Spleen (tissue), 13 donors: ENCODE measurements at regions of chr3 and their contacts with region 1.

Region 1: GRCh38 chr3:138915503-138916498 is 31.1 kb downstream of the FOXL2 start:
- DNase-seq: peak; percentile 98
- H3K4me3 ChIP-seq: peak overlapping the region; percentile 69 to 80 (median 74)
- H3K27ac ChIP-seq: peak overlapping the region; percentile 87 to 97 (median 90)
- H3K4me1 ChIP-seq: peaks cover 0 to 24% (median 18%) of the 10 kb centered on the region in 6 donors
- H3K27me3 ChIP-seq: peaks cover 0 to 9% (median 0%) of the 10 kb centered on the region in 7 donors
- CTCF ChIP-seq: peak; percentile 81 to 98 (median 94)
- POLR2A ChIP-seq: no peak

Region 2: GRCh38 chr3:138594150-138594934 is 321.5 kb before region 1 on chr3 and contains the start of gene CEP70:
- intact Hi-C with region 1: loop called (anchors 2 kb)
- DNase-seq: peak; percentile 97
- H3K4me3 ChIP-seq: peak within 1 kb of the TSS; percentile 61 to 89 (median 74)
- H3K27ac ChIP-seq: peak within 1 kb of the TSS; percentile 71 to 94 (median 86)
- H3K4me1 ChIP-seq: peaks cover 0 to 31% (median 12%) of the 10 kb centered on the region in 6 donors
- H3K27me3 ChIP-seq: peaks cover 0 to 9% (median 0%) of the 10 kb centered on the region in 7 donors
- CTCF ChIP-seq: peak; percentile 82 to 97 (median 95)
- POLR2A ChIP-seq: peak in 2 of 3 donors; percentile 59 to 67
- total RNA-seq, gene CEP70: 10.7 to 19.0 (median 14.7) TPM

Region 3: DNA sequence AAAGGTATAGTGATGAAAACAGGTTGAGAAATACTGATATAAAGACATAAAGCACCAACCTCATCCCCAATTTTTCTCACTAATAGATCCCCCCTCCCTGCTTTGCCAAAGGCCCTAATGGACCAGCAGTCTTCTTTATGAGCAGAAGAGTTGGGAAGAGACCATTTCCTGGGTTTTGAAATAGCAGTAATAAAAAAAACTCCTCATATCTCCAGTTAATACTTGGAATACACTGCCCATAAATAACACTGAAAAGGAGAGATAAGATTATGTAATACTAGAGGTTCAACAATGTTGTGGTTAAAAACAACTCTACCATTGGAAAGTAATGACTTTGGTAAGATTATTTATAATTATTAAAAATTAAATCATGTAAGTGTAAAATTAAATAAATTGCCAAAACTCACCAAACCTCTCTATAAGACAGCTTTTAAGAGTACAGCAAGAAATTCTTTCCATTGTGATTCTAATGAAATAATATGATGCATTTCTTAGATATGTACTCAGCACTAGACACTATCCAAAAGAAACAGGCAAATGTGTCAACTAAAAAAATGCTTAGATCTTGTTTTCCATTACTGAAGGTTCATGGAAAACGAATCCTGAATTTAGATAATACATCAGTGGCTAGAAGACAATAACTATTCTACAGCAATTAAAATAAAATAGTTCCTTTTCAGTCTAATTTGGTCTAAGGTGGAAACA is 219.0 kb before region 1 on chr3:
- intact Hi-C with region 1: loop called (anchors 5 kb)
- DNase-seq: no peak
- H3K4me3 ChIP-seq: no peak overlapping the region
- H3K27ac ChIP-seq: no peak overlapping the region
- H3K4me1 ChIP-seq: no peaks in the 10 kb centered on the region
- H3K27me3 ChIP-seq: no peaks in the 10 kb centered on the region
- CTCF ChIP-seq: no peak
- POLR2A ChIP-seq: no peak

Region 4: DNA sequence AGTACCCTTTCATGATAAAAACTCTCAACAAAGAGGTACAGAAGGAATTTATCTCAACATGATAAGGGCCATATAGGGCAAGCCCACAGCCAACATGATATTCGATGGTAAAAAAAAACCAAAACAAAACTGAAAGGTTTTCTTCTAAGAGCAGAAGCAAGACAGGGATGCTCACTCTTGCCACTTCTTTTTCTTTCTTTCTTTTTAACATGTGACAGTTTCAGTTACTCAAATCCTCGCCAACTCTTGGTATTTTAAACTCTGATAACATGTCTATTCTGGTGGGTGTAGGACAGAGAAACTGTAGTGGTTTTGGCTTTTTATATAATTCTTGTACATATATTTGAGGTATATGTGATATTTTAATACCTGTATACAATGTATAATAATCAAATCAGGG is 836.0 kb after region 1 on chr3:
- intact Hi-C with region 1: no loop called
- DNase-seq: no peak
- H3K4me3 ChIP-seq: no peak overlapping the region
- H3K27ac ChIP-seq: no peak overlapping the region
- H3K4me1 ChIP-seq: no peaks in the 10 kb centered on the region
- H3K27me3 ChIP-seq: no peaks in the 10 kb centered on the region
- CTCF ChIP-seq: no peak
- POLR2A ChIP-seq: no peak